GM10248 (cell line): ENCODE measurements at regions of chr10 and their contacts with region 1.

Region 1: DNA sequence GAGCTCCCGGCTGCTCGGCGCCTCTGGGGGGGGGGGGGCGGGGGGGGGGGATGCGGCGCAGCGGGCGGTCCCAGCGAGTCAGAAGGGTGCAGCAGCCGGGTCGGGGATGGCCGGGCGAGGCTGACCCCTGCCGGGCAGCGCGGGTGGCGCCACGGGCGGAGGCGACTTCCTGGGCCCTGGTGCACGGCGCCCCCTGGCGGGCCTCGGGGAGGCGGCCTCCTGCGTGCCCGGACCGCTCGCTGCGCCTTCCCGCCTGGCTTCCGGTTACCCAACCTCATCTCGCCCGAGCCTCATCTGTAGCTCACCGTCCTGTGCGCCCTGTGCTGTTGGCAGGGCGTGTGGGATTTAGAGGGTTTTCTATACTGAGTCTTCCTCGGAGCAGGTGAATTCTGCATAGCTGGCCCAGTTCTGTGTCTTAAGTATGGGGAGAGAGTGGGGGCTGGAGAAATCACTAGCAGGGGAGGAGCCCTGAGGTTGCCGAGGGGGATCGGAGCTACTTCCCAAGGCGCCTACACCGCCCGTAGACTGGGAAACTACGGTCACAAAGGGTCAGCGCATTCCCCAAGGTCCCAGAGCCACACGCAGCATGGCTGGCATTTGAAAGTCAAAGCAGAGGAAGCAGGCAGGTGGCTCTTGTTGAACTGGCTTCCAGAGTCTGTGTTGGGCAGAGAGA is 28.3 kb upstream of the WDFY4 start:
- DNase-seq: peak; percentile 92
- CTCF ChIP-seq: peak; percentile 100

Region 2: DNA sequence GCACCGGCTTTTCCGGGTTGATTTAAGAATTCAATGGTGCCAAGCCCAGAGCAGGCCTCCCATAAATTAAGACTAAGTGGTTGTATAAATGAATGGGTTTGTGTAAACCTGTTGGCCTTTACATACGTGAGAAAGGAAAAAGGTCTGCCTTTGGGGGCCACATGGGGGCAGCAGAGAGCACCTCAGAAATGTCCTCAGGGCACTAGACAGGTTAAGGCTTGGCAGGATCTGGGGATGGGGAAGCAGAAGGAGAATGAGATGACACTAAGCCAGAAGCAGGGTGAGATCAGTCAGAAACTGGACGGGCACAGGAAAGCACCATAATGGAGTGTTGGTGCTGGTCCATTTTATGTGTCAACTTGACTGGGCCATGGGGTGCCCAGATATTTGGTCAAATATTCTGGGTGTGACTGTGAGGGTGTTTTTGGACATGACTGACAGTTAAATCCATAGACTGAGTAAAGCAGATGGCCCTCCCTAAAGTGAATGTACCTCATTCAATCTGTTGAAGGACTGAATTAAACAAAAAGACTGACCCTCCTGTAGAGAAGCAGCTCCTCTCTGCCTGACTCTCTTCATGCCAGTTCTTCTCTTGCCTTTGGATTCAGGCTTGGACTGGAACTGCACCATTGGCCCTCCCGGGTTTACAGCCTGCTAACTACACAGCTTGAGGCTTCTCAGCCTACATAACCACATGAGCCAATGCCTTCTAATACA is 440.7 kb before region 1 on chr10:
- CTCF ChIA-PET with region 1: no interaction called
- POLR2A ChIA-PET with region 1: no interaction called
- DNase-seq: peak; percentile 48
- CTCF ChIP-seq: peak; percentile 66

Region 3: DNA sequence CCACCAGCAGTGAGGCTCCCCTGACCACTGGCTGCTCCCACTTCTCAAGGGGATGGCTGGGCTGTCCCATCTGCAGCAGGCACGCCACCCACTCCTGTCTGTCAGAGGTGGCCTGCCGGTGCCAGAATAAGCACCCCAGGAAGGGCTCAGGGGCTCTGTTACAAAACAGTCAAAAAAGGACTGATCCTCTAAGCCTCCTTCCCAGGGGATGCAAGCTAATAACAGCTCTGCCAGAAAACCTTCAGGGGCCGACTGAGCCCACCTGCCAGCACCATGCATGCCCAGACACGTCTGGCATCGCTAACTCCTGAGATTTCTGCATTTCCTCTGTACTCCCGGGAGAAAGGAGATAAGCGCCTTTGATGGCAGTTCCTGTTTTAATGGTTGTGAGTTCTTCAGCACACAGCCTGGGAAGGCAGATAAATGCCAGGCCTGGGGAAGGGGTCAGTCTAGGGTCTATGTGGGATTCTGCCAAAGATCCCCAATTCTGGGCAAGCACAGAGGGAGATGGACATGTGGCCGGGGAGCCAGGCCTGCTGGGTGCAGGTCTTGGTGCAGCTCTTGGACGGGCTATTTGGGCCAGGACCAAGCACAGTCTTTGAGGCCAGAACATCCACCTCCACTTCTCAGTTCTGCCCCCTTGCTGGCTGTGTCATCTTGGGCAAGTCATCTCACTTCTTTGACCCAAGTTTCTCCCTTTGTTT is 179.9 kb before region 1 on chr10:
- CTCF ChIA-PET with region 1: no interaction called
- POLR2A ChIA-PET with region 1: no interaction called
- DNase-seq: no peak
- CTCF ChIP-seq: no peak

Region 4: GRCh38 chr10:48519481-48520183 is 136.7 kb before region 1 on chr10:
- CTCF ChIA-PET with region 1: interaction called, 11 read pairs
- POLR2A ChIA-PET with region 1: no interaction called
- DNase-seq: no peak
- CTCF ChIP-seq: no peak

Region 5: DNA sequence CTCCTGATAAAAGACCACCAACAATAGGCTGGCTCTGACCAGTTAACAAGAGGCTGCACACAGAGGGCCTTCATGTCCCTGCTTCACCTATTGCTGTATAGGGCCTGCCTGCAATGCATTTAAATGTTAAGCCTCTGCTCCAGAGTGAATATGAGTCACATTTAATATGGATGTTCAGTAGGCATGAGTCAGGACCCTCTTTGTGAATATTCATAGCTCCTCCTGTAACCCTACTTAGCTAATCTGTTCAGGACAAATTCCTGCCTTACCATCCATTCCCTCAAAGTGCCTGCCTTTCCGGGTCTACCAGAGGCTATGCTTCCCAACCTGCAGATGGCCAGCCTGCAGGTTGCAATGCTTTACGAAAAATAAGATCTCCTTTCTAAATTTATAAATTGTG is 84.0 kb before region 1 on chr10:
- CTCF ChIA-PET with region 1: interaction called, 25 read pairs
- POLR2A ChIA-PET with region 1: no interaction called
- DNase-seq: no peak
- CTCF ChIP-seq: no peak

Region 6: DNA sequence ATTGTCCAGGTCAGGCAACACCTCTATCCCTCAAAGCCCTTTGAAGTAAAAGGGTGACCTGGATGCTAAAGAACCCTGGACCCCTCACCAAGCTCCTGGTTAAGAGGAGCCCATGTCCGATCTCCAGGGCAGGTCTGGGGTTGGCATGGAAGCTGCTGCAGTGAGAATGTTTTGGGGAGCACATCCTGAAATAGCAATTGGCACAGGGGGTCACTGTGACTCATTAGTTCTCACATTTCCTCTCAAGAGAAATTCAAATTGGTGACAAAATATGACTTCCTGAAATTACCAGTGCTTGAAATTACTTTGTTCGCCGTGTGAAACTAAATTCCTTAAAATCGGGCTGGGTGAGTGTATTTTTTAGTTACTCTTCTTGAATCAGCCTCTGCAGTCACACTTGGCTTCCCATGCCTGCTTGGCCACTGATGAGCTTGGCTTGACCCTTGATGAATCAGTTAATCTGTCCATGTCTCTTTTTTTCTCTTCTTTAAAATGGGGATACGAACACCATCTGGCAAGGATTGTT is 32.7 kb before region 1 on chr10:
- CTCF ChIA-PET with region 1: interaction called, 33 read pairs
- POLR2A ChIA-PET with region 1: no interaction called
- DNase-seq: no peak
- CTCF ChIP-seq: no peak

Region 7: GRCh38 chr10:48714088-48714487 is 57.7 kb after region 1 on chr10:
- CTCF ChIA-PET with region 1: interaction called, 42 read pairs
- POLR2A ChIA-PET with region 1: no interaction called
- DNase-seq: no peak
- CTCF ChIP-seq: no peak

Region 8: GRCh38 chr10:48765039-48765438 is 108.7 kb after region 1 on chr10:
- CTCF ChIA-PET with region 1: interaction called, 55 read pairs
- POLR2A ChIA-PET with region 1: no interaction called
- DNase-seq: no peak
- CTCF ChIP-seq: peak; percentile 32

Region 9: DNA sequence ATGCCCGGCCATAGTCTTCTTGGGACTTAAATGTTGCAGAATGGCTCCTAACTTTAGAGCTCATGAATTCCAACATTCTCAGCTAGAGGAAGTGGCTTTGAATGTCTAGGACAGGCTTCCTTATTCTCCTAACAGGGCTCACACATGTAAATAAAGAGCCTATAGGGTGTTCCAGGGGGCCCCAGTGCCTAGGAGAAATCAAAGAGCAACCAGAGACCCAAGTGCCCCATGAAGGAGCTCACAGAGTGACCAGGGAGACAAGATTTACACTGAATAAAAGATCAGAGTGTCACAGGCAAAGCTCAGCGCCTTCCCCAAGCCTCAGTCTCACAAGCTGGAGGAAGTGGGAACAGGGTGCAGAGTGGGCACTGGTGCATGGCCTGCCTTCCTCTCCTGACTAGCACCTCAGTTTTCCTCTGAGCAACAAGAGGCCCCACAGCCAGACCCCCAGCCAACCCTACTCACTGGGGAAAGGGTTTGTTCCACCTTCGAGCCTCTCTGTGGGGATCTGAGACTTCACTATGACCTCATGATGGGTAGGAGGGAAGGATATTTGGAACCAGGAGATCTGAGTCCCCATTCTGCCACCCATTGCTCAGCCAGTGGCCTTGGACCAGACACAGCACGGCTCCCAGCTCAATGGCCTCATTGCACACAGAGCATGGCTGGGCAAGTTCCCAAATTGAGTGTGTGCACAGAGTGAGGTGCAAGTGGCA is 515.8 kb after region 1 on chr10:
- CTCF ChIA-PET with region 1: interaction called, 24 read pairs
- POLR2A ChIA-PET with region 1: no interaction called
- DNase-seq: no peak
- CTCF ChIP-seq: no peak